ENCODE measurements at regions of chr9 and their contacts with region 1.

Region 1: DNA sequence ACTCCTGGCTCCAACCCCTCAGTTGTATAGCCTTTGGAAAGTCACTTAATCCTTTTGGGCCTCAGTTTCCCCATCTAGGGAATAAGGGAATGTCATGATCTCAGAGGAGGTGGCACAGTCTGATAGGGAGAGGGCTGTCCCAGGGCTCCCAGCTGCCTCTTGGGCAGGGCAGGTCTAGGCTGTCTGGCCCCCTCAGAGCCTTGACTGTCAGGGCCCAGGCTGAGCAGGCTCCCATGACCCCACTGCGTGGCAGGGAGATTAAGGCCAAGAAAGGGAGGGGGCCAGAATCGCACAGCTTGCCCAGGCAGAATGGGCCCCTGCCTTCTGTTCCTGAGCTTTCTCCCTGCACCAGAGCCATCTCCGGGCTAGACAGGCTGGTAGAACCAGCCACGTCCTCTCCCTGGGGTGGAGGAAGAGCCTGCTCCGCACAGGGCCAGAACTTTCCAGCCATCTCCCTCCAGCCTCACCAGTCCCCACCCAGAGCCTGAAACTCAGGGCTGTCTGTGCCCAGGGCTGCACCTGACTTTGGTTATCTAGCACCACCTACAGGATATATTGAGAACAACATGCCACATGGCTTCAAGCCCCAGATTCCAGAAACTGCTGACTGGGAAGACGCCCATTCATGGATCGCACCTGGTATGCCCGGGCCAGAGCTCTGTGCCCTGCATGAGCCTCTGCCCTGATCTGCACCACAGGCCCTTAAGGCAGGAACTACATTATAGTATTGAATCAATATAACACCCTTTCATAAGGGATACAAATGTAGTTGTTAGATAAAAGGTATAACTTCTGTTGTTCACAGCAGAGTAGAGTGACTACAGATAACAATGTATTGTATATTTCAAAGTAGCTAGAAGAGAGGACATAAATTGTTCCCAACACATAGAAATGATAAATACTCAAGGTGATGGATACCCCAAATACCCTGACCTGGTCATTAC is 32.0 kb downstream of the NAIF1 start:
- DNase-seq: peak; percentile 88
- H3K4me3 ChIP-seq: no peak overlapping the region
- H3K27ac ChIP-seq: peak overlapping the region in 4 of 8 donors; percentile 10 to 50 (median 38)
- H3K4me1 ChIP-seq: peaks cover 8 to 55% (median 45%) of the 10 kb centered on the region in 6 donors
- H3K27me3 ChIP-seq: no peaks in the 10 kb centered on the region
- CTCF ChIP-seq: peak; percentile 90 to 96 (median 93)
- POLR2A ChIP-seq: no peak

Region 2: GRCh38 chr9:127930231-127931091 is 104.6 kb before region 1 on chr9 and contains the start of gene PIP5KL1:
- intact Hi-C with region 1: no loop called
- DNase-seq: peak; percentile 92
- H3K4me3 ChIP-seq: peak within 1 kb of the TSS; percentile 50 to 83 (median 70)
- H3K27ac ChIP-seq: peak within 1 kb of the TSS; percentile 27 to 79 (median 62)
- H3K4me1 ChIP-seq: peaks cover 29 to 82% (median 53%) of the 10 kb centered on the region in 6 donors
- H3K27me3 ChIP-seq: peaks cover 0 to 58% (median 16%) of the 10 kb centered on the region in 7 donors
- CTCF ChIP-seq: peak in 1 of 11 experiments; percentile 25
- POLR2A ChIP-seq: no peak
- total RNA-seq, gene PIP5KL1: 0.46 to 3.6 (median 0.94) TPM in 5 of 7 donors, not detected in the others

Region 3: GRCh38 chr9:127943731-127944144 is 91.4 kb before region 1 on chr9:
- intact Hi-C with region 1: loop called (anchors 2 kb)
- DNase-seq: peak; percentile 93
- H3K4me3 ChIP-seq: no peak overlapping the region
- H3K27ac ChIP-seq: peak overlapping the region in 4 of 8 donors; percentile 7 to 48 (median 30)
- H3K4me1 ChIP-seq: peaks cover 7 to 56% (median 25%) of the 10 kb centered on the region in 6 donors
- H3K27me3 ChIP-seq: no peaks in the 10 kb centered on the region
- CTCF ChIP-seq: peak; percentile 88 to 94 (median 92)
- POLR2A ChIP-seq: no peak